ENCODE measurements at regions of chr7 and their contacts with region 1.

Region 1: GRCh38 chr7:99990460-99990852 is 14.6 kb upstream of the AZGP1 start:
- DNase-seq: no peak
- ATAC-seq: no peak
- H3K4me3 ChIP-seq: no peak overlapping the region
- H3K4me3 Mint-ChIP-seq: no peak overlapping the region
- H3K27ac ChIP-seq: no peak overlapping the region
- H3K27ac Mint-ChIP-seq: no peak overlapping the region
- H3K4me1 ChIP-seq: peaks cover 0 to 4% of the 10 kb centered on the region in 2 donors
- H3K4me1 Mint-ChIP-seq: peaks cover 3% of the 10 kb centered on the region
- H3K27me3 ChIP-seq: peaks cover 0 to 8% (median 0%) of the 10 kb centered on the region in 4 experiments
- H3K27me3 Mint-ChIP-seq: peaks cover 24% of the 10 kb centered on the region
- CTCF ChIP-seq: no peak

Region 2: DNA sequence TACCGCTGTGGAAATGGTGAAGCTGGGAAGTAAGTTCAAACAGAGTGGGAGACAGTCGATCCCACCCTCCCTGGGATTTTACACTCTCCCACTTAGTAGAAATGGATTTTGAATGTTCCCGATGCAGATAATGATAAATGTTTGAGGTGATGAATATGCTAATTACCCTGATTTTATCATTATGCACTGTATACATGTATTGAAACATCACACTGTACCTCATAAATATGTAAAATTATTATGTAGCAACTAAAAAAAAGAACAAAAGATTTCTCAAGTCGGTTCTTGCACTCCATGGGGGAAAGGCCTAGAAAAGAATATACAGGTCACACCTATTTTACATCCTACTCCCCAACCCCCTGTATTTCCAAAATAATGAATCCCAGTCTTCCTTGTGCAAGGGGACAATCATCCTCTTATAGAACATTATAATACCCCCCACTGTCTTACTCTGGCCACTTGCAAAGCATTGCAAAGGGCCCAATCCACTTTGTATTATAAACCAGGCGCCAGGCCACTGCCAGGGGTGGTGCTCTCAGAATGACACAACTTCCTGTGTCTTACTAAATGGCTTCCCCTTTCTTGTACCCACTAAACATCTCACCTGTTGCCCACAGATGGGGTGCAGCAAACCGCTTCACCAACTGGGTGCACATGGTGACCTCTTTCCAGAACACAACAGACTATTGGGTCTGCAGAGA is 93.0 kb before region 1 on chr7:
- CTCF ChIA-PET with region 1: no interaction called
- POLR2A ChIA-PET with region 1: no interaction called
- intact Hi-C with region 1: no loop called
- DNase-seq: no peak
- ATAC-seq: no peak
- H3K4me3 ChIP-seq: no peak overlapping the region
- H3K4me3 Mint-ChIP-seq: no peak overlapping the region
- H3K27ac ChIP-seq: no peak overlapping the region
- H3K27ac Mint-ChIP-seq: peak overlapping the region; percentile 46
- H3K4me1 ChIP-seq: no peaks in the 10 kb centered on the region
- H3K4me1 Mint-ChIP-seq: peaks cover 7% of the 10 kb centered on the region
- H3K27me3 ChIP-seq: no peaks in the 10 kb centered on the region
- H3K27me3 Mint-ChIP-seq: no peaks in the 10 kb centered on the region
- CTCF ChIP-seq: no peak

Region 3: GRCh38 chr7:99910976-99911375 is 79.5 kb before region 1 on chr7:
- CTCF ChIA-PET with region 1: interaction called, 94 read pairs
- POLR2A ChIA-PET with region 1: interaction called, 3 read pairs
- intact Hi-C with region 1: loop called (anchors 1 kb)
- DNase-seq: no peak
- ATAC-seq: no peak
- H3K4me3 ChIP-seq: no peak overlapping the region
- H3K4me3 Mint-ChIP-seq: no peak overlapping the region
- H3K27ac ChIP-seq: no peak overlapping the region
- H3K27ac Mint-ChIP-seq: no peak overlapping the region
- H3K4me1 ChIP-seq: peaks cover 5 to 6% of the 10 kb centered on the region in 2 donors
- H3K4me1 Mint-ChIP-seq: peaks cover 27% of the 10 kb centered on the region
- H3K27me3 ChIP-seq: no peaks in the 10 kb centered on the region
- H3K27me3 Mint-ChIP-seq: no peaks in the 10 kb centered on the region
- CTCF ChIP-seq: no peak

Region 4: GRCh38 chr7:99976626-99977025 is 13.8 kb before region 1 on chr7:
- CTCF ChIA-PET with region 1: interaction called, 35 read pairs
- POLR2A ChIA-PET with region 1: no interaction called
- intact Hi-C with region 1: no loop called
- DNase-seq: no peak
- ATAC-seq: no peak
- H3K4me3 ChIP-seq: no peak overlapping the region
- H3K4me3 Mint-ChIP-seq: no peak overlapping the region
- H3K27ac ChIP-seq: no peak overlapping the region
- H3K27ac Mint-ChIP-seq: no peak overlapping the region
- H3K4me1 ChIP-seq: no peaks in the 10 kb centered on the region
- H3K4me1 Mint-ChIP-seq: peaks cover 1% of the 10 kb centered on the region
- H3K27me3 ChIP-seq: peaks cover 0 to 13% (median 1%) of the 10 kb centered on the region in 4 experiments
- H3K27me3 Mint-ChIP-seq: peaks cover 33% of the 10 kb centered on the region
- CTCF ChIP-seq: no peak